ENCODE measurements at regions of chrX and their contacts with region 1.

Region 1: GRCh38 chrX:135521405-135522189 is 1.1 kb downstream of the INTS6L start:
- DNase-seq: peak; percentile 87
- H3K4me3 ChIP-seq: peak overlapping the region; percentile 58 to 73 (median 65)
- H3K27ac ChIP-seq: peak overlapping the region; percentile 61
- H3K4me1 ChIP-seq: peaks cover 4% of the 10 kb centered on the region
- H3K27me3 ChIP-seq: no peaks in the 10 kb centered on the region
- CTCF ChIP-seq: no peak
- POLR2A ChIP-seq: peak; percentile 57

Region 2: DNA sequence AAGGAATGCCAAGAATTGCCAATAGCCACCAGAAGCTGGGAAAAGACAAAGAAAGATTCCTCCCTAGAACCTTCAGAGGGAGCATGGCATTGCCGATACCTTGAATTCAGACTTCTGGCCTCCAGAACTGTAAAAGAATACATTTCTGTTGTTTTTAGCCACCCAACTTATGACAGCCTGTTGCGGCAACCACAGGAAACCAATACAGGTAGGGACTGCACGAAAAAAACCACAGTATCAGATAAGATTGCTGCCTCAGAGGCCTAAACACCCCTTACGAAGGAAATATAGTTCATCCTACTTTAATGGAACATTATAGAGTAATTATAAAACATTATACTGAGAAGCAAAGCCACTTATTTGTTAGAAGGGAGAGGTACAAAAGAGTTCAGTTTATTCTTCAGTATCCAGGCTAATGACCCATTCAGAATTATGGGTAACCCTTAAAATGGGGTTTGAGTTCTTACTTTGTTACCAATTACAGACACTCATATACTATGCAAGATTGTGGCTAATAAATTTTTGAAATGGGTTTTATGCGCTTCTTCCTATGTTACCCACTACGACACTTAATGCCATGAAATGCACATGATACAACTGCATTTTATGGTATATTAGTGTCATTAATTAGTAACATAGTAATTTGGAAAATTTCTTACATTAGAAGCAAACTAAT is 137.3 kb before region 1 on chrX:
- CTCF ChIA-PET with region 1: no interaction called
- POLR2A ChIA-PET with region 1: no interaction called
- dilution Hi-C with region 1: no loop called
- intact Hi-C with region 1: loop called (anchors 1 kb)
- DNase-seq: no peak
- H3K4me3 ChIP-seq: no peak overlapping the region
- H3K27ac ChIP-seq: no peak overlapping the region
- H3K4me1 ChIP-seq: peaks cover 20% of the 10 kb centered on the region
- H3K27me3 ChIP-seq: no peaks in the 10 kb centered on the region
- CTCF ChIP-seq: no peak
- POLR2A ChIP-seq: no peak

Region 3: DNA sequence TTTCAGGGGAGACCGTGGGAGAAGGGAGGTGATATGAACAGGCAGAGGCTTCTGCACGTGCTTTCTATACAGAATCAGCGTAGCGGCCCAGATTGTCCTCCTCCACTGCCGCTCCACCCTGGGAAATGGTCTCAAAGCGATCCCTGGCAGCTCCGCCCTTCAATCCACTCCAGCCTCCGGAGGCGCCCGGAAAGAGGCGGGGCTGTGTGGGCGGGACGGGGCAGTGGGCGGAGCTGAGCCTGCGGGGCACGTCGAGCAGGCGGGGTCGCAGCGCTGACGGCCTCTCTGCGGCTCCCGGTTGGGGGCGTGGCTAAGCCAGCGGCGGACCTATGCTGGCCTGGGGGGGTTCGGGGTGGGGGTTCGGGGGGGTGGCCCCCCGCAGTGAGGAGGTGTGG is 100.1 kb before region 1 on chrX:
- CTCF ChIA-PET with region 1: no interaction called
- POLR2A ChIA-PET with region 1: no interaction called
- dilution Hi-C with region 1: no loop called
- intact Hi-C with region 1: loop called (anchors 2 kb)
- DNase-seq: peak; percentile 76
- H3K4me3 ChIP-seq: peak overlapping the region in 1 of 3 experiments; percentile 34
- H3K27ac ChIP-seq: no peak overlapping the region
- H3K4me1 ChIP-seq: no peaks in the 10 kb centered on the region
- H3K27me3 ChIP-seq: peaks cover 0 to 2% of the 10 kb centered on the region in 2 experiments
- CTCF ChIP-seq: no peak
- POLR2A ChIP-seq: no peak

Region 4: GRCh38 chrX:135484641-135485289 is 36.8 kb before region 1 on chrX:
- CTCF ChIA-PET with region 1: interaction called, 3 read pairs
- POLR2A ChIA-PET with region 1: no interaction called
- dilution Hi-C with region 1: no loop called
- intact Hi-C with region 1: loop called (anchors 5 kb)
- DNase-seq: peak; percentile 46
- H3K4me3 ChIP-seq: no peak overlapping the region
- H3K27ac ChIP-seq: no peak overlapping the region
- H3K4me1 ChIP-seq: no peaks in the 10 kb centered on the region
- H3K27me3 ChIP-seq: no peaks in the 10 kb centered on the region
- CTCF ChIP-seq: peak; percentile 32 to 45
- POLR2A ChIP-seq: no peak

Region 5: GRCh38 chrX:135572436-135572835 is 50.8 kb after region 1 on chrX:
- CTCF ChIA-PET with region 1: no interaction called
- POLR2A ChIA-PET with region 1: no interaction called
- dilution Hi-C with region 1: no loop called
- intact Hi-C with region 1: loop called (anchors 5 kb)
- DNase-seq: no peak
- H3K4me3 ChIP-seq: no peak overlapping the region
- H3K27ac ChIP-seq: no peak overlapping the region
- H3K4me1 ChIP-seq: no peaks in the 10 kb centered on the region
- H3K27me3 ChIP-seq: no peaks in the 10 kb centered on the region
- CTCF ChIP-seq: peak; percentile 3 to 13
- POLR2A ChIP-seq: no peak

Region 6: DNA sequence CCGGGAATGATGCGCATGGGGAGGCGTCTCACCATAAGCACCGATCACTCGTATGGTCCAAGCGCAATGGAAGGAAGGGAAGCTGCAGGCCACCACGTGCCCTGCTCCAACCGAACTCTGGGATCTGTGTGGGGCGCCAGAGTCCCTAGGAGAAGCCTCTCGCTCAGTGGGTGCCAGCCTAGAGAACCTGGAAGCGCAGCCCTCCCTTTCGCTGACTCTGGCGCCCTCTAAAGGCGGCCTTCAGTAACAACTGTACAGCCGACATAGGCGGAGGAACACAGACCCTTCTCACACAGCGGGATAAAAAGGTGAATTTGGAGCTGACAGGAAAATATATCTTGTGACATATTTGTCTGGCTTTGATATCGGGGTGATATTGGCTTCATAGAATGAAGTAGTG is 74.9 kb after region 1 on chrX:
- CTCF ChIA-PET with region 1: no interaction called
- POLR2A ChIA-PET with region 1: no interaction called
- dilution Hi-C with region 1: no loop called
- intact Hi-C with region 1: loop called (anchors 5 kb)
- DNase-seq: peak; percentile 1
- H3K4me3 ChIP-seq: no peak overlapping the region
- H3K27ac ChIP-seq: no peak overlapping the region
- H3K4me1 ChIP-seq: no peaks in the 10 kb centered on the region
- H3K27me3 ChIP-seq: no peaks in the 10 kb centered on the region
- CTCF ChIP-seq: peak; percentile 25 to 56
- POLR2A ChIP-seq: no peak

Measured in endothelial cell of umbilical vein (primary cell).